ENCODE measurements at regions of chr3 and their contacts with region 1.

Region 1: GRCh38 chr3:194134757-194135528 is 1.0 kb upstream of the HES1 start:
- DNase-seq: peak; percentile 93 to 96
- ATAC-seq: peak; percentile 69 to 78 (median 72)
- H3K4me3 ChIP-seq: peak overlapping the region; percentile 92
- H3K27ac ChIP-seq: peak overlapping the region; percentile 99
- H3K4me1 ChIP-seq: peaks cover 47% of the 10 kb centered on the region
- H3K27me3 ChIP-seq: no peaks in the 10 kb centered on the region
- CTCF ChIP-seq: no peak

Region 2: GRCh38 chr3:193780810-193781472 is 354.0 kb before region 1 on chr3:
- intact Hi-C with region 1: loop called (anchors 2 to 5 kb)
- DNase-seq: peak; percentile 73 to 81
- ATAC-seq: peak; percentile 86 to 96 (median 88)
- H3K4me3 ChIP-seq: no peak overlapping the region
- H3K27ac ChIP-seq: no peak overlapping the region
- H3K4me1 ChIP-seq: no peaks in the 10 kb centered on the region
- H3K27me3 ChIP-seq: peaks cover 0 to 15% (median 0%) of the 10 kb centered on the region in 3 donors
- CTCF ChIP-seq: peak; percentile 75

Region 3: DNA sequence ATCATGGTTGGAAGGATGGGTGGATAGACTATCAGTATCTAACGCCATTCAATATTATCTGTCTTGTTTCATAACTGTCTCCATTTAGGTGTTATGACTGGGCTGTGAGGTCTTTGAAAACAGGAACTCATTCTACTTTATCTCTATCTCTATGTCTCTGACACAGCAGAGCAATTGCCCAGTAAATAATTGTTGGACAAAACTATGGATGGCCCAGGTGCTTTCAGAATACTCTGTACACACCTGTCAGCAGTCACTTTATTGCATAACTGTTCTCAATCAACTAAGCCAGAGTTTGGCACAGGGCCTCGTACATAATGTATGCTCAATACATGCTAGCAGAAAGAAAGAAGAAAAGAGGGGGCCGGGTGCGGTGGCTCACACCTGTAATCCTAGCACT is 331.7 kb before region 1 on chr3:
- intact Hi-C with region 1: no loop called
- DNase-seq: no peak
- ATAC-seq: no peak
- H3K4me3 ChIP-seq: no peak overlapping the region
- H3K27ac ChIP-seq: no peak overlapping the region
- H3K4me1 ChIP-seq: peaks cover 5% of the 10 kb centered on the region
- H3K27me3 ChIP-seq: no peaks in the 10 kb centered on the region
- CTCF ChIP-seq: no peak

Region 4: DNA sequence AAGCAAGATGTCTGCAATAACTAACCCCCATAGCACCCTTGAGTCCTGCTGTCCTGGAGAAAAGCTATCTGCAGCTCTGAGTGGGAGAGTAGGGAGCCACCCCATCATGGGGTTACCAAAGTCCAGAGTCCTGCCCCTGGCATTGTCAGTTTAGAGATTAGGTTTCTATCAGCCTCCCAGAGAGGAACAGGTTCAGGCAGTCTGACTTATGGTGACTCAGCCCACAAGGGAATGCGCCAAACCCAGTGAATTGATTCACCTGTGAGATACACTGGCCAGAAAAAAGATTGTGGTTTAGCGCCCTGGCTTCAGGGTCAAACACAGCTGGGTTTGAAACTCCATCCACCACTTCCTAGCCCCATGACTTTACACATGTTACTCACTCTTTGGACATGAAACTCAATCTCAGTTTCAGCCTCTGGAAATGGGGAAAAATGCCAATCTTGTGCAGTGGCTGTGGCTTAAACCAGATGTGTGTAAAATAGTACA is 262.6 kb before region 1 on chr3:
- intact Hi-C with region 1: loop called in 1 of 2 experiments (anchors 5 kb)
- DNase-seq: peak in 1 of 2 donors; percentile 32
- ATAC-seq: peak; percentile 95 to 97 (median 96)
- H3K4me3 ChIP-seq: no peak overlapping the region
- H3K27ac ChIP-seq: peak overlapping the region; percentile 41
- H3K4me1 ChIP-seq: peaks cover 15% of the 10 kb centered on the region
- H3K27me3 ChIP-seq: no peaks in the 10 kb centered on the region
- CTCF ChIP-seq: no peak

Region 5: DNA sequence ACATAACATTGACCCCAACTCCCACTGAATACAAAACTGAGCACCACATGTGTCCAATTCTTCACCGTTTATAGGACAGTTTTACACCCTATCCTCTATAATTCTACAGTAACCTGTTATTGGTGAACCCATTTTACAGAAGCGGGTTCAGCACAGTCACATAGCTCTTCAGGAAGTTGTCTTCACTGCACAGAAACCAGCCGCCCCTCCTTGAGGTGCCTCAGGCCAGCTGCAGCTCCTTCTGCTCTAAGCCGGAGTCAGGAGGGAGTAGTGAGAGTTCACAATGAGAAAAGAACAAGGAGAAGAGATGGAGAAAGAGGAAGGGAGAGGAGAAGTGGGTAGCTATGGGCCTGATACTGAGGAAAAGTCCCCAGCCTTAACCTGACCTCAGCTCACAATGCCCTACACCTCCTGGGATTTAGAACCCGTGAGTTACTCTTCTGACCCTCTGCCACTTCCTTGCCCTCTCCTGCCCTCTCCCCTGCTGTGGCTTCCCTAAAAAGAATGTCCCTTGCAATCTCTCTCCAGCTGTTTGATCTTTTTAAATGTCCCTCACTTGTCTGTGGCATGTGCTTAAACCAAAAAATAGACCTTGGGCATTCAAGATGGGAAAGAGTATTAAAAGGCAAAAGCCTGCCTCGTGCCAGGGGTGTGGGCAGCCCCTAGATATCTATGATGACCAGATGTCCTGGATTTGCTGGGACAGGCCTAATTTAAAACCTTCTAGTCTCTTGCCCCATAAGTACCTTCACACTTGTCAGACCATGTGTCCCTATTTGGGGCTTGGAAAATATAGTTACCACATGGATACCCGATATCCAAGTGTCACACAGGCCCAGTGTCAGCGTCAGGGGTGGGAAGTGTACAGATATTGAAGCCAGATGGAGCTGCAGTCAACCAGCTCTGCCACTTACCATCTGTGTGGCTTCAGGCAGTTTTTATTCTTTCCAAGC is 70.3 kb before region 1 on chr3:
- intact Hi-C with region 1: loop called in 1 of 2 experiments (anchors 5 kb)
- DNase-seq: peak in 1 of 2 donors; percentile 69
- ATAC-seq: peak; percentile 91 to 96 (median 94)
- H3K4me3 ChIP-seq: no peak overlapping the region
- H3K27ac ChIP-seq: peak overlapping the region; percentile 81
- H3K4me1 ChIP-seq: peaks cover 32% of the 10 kb centered on the region
- H3K27me3 ChIP-seq: no peaks in the 10 kb centered on the region
- CTCF ChIP-seq: peak; percentile 15

Region 6: DNA sequence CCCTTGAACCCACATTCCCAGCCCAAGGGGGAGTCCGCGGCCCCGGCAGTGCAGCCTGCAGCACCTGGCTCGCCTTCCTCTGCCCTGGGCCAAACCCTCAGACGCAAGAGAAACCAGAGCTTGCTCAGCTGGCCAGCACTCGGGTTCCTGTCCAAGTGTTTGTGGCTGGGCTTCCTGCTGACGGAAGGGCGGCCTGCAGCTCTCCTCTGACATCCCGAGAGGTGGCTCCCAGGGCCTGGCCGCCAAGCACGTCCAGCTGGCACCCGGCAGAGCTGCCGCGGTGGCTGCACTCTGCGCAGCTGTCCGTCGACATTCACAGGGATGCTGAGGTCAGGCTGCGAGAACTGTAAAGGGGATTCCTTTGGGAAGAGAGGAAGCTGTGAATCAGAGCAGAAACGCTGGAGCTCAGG is 130.5 kb after region 1 on chr3:
- intact Hi-C with region 1: loop called (anchors 2 to 5 kb)
- DNase-seq: peak; percentile 91 to 97
- ATAC-seq: peak; percentile 95 to 97 (median 97)
- H3K4me3 ChIP-seq: no peak overlapping the region
- H3K27ac ChIP-seq: peak overlapping the region; percentile 64
- H3K4me1 ChIP-seq: peaks cover 25% of the 10 kb centered on the region
- H3K27me3 ChIP-seq: no peaks in the 10 kb centered on the region
- CTCF ChIP-seq: no peak

Region 7: GRCh38 chr3:194277104-194277785 is 142.3 kb after region 1 on chr3:
- intact Hi-C with region 1: no loop called
- DNase-seq: peak; percentile 79 to 85
- ATAC-seq: peak; percentile 83 to 89 (median 86)
- H3K4me3 ChIP-seq: peak overlapping the region; percentile 17
- H3K27ac ChIP-seq: peak overlapping the region; percentile 85
- H3K4me1 ChIP-seq: peaks cover 35% of the 10 kb centered on the region
- H3K27me3 ChIP-seq: no peaks in the 10 kb centered on the region
- CTCF ChIP-seq: no peak

Measured in psoas muscle (tissue), 8 donors.